ENCODE measurements at regions of chr13 and their contacts with region 1.

Region 1: DNA sequence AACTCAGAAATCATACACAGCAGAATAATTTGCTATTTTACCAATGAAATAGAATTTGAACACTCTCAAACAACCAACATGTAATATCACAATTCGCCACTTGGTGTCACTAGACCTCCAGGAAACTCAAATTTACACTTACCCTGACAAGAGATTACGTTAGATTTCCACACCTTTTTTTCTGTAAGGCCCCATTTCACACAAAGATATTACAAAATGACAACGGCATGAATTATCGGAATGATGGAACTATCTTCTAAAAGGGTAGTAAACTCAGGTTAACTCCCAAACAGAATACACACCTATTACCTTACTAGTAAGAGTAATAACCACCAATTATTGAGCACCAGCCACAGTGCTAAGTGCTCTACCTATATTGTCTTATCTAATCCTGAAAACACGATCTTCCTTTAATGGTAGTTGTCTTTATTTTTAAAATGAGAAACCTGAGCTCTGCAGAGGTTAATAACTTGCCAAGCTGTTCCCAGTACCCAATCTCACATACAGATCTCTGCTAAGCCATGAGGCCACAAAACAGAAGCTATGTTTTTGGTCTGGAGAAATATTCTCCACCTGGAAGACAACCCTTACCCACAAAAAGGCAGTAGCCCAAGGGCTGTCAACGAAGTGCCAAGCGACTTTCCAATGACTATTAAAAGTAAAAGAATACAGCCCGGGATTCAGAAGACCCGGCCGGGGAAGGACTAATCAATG is 152.4 kb downstream of the DCLK1 start:
- DNase-seq: peak; percentile 20 to 36 (median 29)
- ATAC-seq: peak; percentile 62
- H3K4me3 ChIP-seq: no peak overlapping the region
- H3K27ac ChIP-seq: peak overlapping the region in 2 of 4 donors; percentile 6 to 17
- H3K4me1 ChIP-seq: no peaks in the 10 kb centered on the region
- H3K27me3 ChIP-seq: no peaks in the 10 kb centered on the region
- CTCF ChIP-seq: peak; percentile 65 to 88 (median 83)
- POLR2A ChIP-seq: no peak

Region 2: DNA sequence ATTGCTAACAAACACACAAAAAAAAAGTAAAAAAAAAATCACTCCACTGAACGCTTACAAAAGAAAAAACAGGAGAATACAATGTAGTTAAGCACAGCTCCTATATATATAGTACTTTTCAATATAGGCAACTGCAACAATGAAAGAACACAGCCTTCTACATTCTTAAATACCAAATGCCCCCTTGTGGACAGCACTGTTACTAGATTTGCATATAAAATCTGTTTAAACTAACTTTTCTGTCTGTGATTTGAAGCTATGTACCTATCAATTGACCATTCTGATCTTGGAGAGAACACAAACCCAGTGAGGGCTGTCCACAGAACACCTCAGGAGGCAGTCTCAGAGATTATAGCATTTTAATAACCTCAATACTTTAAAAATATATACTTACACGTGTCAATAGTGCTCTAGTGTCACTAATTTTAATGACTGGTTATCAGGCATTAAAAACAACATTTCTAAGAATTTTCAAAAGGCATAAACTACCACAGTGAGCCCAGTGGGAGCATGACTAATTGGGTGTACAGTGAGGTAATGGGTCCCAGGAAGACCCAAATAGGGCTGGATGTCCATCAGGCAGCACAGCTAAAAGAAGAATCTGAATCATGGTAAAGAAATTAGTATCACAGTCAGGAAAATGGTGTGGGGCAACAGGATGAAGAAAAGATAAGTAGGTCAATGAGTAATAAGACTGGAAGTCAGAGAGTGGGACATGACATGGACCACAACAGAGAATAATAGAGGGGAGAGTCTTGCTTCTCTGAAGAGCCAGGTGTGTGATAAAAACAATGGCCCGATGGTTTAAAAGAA is 296.6 kb after region 1 on chr13:
- intact Hi-C with region 1: loop called (anchors 5 kb)
- DNase-seq: peak in 3 of 4 donors; percentile 32 to 62 (median 39)
- ATAC-seq: no peak
- H3K4me3 ChIP-seq: no peak overlapping the region
- H3K27ac ChIP-seq: no peak overlapping the region
- H3K4me1 ChIP-seq: no peaks in the 10 kb centered on the region
- H3K27me3 ChIP-seq: no peaks in the 10 kb centered on the region
- CTCF ChIP-seq: peak in 6 of 7 experiments; percentile 40 to 65 (median 52)
- POLR2A ChIP-seq: no peak

Region 3: DNA sequence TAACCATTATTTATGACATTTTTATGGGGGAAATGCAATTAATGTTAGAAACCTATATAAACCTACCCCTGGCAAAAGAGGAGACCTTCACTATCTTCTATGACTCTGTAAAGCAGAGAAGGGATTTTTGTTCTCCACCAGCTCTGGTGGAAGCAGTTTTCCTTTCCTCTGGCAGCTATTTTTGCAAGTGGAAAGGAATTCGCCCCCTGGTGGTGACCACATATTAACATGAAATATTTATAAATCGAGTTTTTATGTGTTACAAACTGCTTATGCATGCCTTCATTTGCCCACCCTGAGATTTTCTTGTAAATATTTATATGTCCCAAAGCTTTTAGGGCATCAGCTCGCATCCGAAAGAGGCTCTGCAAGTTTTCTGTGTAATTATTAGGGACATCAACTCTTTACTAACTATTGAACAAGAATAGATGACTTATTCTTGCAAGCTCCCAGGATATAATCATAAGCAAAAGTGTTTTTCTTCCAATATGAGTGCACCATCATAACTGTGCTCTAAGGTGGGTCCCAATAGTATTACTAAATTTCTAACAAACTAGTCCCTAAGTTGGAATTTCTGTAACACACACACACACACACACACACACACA is 757.5 kb after region 1 on chr13:
- intact Hi-C with region 1: loop called (anchors 10 kb)
- DNase-seq: peak; percentile 54 to 58 (median 56)
- ATAC-seq: no peak
- H3K4me3 ChIP-seq: no peak overlapping the region
- H3K27ac ChIP-seq: no peak overlapping the region
- H3K4me1 ChIP-seq: no peaks in the 10 kb centered on the region
- H3K27me3 ChIP-seq: no peaks in the 10 kb centered on the region
- CTCF ChIP-seq: peak; percentile 56 to 69 (median 59)
- POLR2A ChIP-seq: no peak